RWPE1 (cell line): ENCODE measurements at regions of chr11 and their contacts with region 1.

Region 1: GRCh38 chr11:28105869-28106268 is 2.1 kb downstream of the KIF18A start:
- DNase-seq: no peak
- H3K27ac ChIP-seq: no peak overlapping the region
- CTCF ChIP-seq: no peak

Region 2: DNA sequence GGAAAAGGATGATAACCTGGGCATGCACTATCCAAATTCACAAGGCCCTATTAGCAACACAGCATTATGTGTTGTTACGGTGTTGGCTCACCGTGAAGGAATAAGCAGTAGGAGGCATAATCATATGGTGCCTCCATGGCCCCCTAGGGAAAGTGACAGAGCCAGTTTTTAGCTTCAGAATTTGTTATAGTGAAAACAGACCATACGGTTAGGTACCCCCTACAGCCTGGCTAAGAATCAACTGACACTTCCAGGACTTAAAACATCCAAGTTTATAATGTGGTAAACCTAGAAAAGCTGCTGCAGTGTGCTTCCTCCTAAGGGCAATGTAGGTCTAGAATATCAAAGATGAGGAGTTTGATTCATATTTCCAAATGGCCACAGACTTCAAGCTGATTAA is 28.3 kb before region 1 on chr11:
- CTCF ChIA-PET with region 1: no interaction called
- POLR2A ChIA-PET with region 1: interaction called, 17 read pairs
- DNase-seq: no peak
- H3K27ac ChIP-seq: no peak overlapping the region
- CTCF ChIP-seq: no peak

Region 3: GRCh38 chr11:28090052-28090749 is 15.7 kb before region 1 on chr11:
- CTCF ChIA-PET with region 1: no interaction called
- POLR2A ChIA-PET with region 1: no interaction called
- DNase-seq: no peak
- H3K27ac ChIP-seq: no peak overlapping the region
- CTCF ChIP-seq: no peak

Region 4: DNA sequence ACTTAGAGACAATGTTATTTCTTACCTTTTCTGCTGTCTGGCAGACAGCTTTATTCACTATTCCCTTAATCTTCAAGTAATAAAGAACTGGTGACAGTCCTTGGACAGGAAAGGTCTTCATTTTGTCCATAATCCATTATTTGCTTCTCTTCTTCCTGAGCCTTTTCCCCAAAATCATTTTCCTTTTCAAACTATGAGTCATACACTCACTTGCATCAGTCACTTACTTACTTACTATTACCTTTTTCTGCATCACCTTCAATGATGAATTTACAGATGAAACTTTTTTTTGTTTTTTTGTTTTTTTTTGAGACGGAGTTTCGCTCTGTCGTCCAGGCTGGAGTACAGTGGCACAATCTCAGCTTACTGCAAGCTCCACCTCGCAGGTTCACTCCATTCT is 11.8 kb after region 1 on chr11:
- CTCF ChIA-PET with region 1: no interaction called
- POLR2A ChIA-PET with region 1: no interaction called
- DNase-seq: no peak
- H3K27ac ChIP-seq: no peak overlapping the region
- CTCF ChIP-seq: no peak